ENCODE measurements at regions of chr4 and their contacts with region 1.

Region 1: DNA sequence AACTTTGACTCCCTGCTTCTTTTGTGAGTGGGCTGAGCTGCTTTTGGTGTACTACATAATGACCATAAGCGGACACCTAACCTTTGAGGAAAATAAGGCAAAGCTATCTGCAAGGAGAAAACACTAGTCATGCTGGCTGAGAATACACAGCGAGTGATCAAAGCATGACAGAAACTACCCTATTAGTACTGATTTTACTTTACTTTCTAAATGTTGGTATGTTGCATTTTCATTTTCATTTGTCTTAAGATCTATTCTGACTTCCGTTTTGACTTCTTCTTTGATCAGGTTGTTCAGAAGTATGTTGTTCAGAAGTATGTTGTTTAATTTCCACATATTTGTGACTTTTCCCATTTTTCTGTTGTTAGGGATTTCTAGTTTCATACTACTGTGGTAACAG is 361.1 kb downstream of the TRAM1L1 start:
- DNase-seq: no peak
- H3K4me3 ChIP-seq: no peak overlapping the region
- H3K27ac ChIP-seq: no peak overlapping the region
- H3K4me1 ChIP-seq: no peaks in the 10 kb centered on the region
- H3K27me3 ChIP-seq: no peaks in the 10 kb centered on the region
- CTCF ChIP-seq: no peak
- POLR2A ChIP-seq: no peak

Region 2: DNA sequence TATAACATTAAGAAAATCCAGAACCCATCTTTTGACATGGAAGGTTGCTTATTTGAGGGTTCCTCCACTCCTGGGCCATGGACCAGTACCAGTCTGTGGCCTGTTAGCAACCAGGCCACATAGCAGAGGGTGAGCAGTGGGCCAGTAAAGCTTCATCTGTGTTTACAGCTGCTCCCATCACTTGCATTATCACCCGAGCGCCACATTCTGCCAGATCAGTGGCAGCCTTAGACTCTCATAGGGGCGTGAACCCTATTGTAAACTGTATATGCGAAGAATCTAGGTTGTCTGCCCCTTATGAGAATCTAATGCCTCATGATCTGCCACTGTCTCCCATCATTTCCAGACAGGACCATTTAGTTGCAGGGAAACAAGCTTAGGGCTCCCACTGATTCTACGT is 1669.4 kb before region 1 on chr4:
- intact Hi-C with region 1: loop called (anchors 10 kb)
- DNase-seq: no peak
- H3K4me3 ChIP-seq: no peak overlapping the region
- H3K27ac ChIP-seq: no peak overlapping the region
- H3K4me1 ChIP-seq: no peaks in the 10 kb centered on the region
- H3K27me3 ChIP-seq: no peaks in the 10 kb centered on the region
- CTCF ChIP-seq: no peak
- POLR2A ChIP-seq: no peak

Region 3: GRCh38 chr4:117293784-117294183 is 569.5 kb after region 1 on chr4:
- intact Hi-C with region 1: no loop called
- DNase-seq: no peak
- H3K4me3 ChIP-seq: no peak overlapping the region
- H3K27ac ChIP-seq: no peak overlapping the region
- H3K4me1 ChIP-seq: no peaks in the 10 kb centered on the region
- H3K27me3 ChIP-seq: no peaks in the 10 kb centered on the region
- CTCF ChIP-seq: no peak
- POLR2A ChIP-seq: no peak